ENCODE measurements at regions of chr5 and their contacts with region 1.

Region 1: DNA sequence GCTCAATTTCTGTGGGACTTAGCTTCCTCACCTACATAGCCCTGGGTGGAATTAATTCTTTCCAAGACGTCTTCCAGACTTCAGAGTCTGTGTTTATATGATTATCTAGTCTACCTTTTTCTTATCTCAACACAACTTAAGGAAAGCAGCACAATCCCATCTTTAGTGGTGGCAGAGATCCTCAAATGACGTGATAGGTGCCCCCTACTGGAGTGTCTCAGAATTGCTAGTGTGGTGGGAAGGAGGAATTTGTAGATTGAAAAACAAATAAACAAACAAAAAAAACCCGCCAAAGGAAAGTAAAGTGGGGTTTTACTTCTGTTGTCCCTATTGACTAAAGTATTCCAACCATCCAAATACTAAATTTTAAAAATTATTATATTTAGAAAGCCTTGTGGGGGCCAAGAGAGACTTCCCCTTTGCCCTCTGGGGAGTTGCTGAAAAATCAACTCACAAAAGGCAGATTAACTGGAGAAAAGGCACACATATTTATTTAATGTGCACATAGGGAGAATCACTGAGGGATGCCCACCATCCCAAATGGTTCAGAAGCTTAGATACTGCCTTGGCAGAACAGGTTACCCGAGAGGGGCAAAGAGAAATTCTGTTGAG is 283.3 kb downstream of the TMEM167A start:
- DNase-seq: peak in 4 of 5 donors; percentile 3 to 18 (median 10)
- H3K4me3 ChIP-seq: no peak overlapping the region
- H3K4me3 Mint-ChIP-seq: no peak overlapping the region
- H3K27ac ChIP-seq: no peak overlapping the region
- H3K27ac Mint-ChIP-seq: peak overlapping the region in 1 of 8 donors; percentile 32
- H3K4me1 ChIP-seq: no peaks in the 10 kb centered on the region
- H3K4me1 Mint-ChIP-seq: no peaks in the 10 kb centered on the region
- H3K27me3 ChIP-seq: no peaks in the 10 kb centered on the region
- H3K27me3 Mint-ChIP-seq: peaks cover 8 to 9% of the 10 kb centered on the region in 2 donors

Region 2: GRCh38 chr5:82351754-82352145 is 442.2 kb before region 1 on chr5:
- CTCF ChIA-PET with region 1: interaction called, 13 read pairs
- POLR2A ChIA-PET with region 1: no interaction called
- DNase-seq: peak in 2 of 5 donors; percentile 37 to 38
- H3K4me3 ChIP-seq: no peak overlapping the region
- H3K4me3 Mint-ChIP-seq: no peak overlapping the region
- H3K27ac ChIP-seq: no peak overlapping the region
- H3K27ac Mint-ChIP-seq: no peak overlapping the region
- H3K4me1 ChIP-seq: peaks cover 6% of the 10 kb centered on the region
- H3K4me1 Mint-ChIP-seq: peaks cover 5 to 26% (median 7%) of the 10 kb centered on the region in 3 donors
- H3K27me3 ChIP-seq: no peaks in the 10 kb centered on the region
- H3K27me3 Mint-ChIP-seq: peaks cover 0 to 1% of the 10 kb centered on the region in 2 donors

Region 3: DNA sequence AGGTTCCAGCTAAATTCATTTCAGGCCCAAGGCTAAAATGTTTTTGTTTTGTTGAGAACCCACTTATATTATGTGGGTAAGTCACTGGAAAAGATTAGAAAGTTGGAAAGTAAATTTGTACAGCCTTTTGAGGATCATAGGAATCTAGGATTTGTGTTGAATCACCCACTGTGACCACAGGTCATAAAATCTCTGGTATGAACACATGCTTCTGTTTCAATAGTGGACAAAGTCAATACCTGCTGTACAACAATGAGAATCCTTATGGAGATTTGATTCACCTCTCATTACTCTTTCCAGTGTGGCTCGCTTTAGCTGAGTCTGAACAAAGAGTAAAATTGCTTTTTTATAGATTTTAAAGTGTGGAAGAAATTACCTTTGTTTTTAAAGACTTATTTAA is 86.2 kb before region 1 on chr5:
- CTCF ChIA-PET with region 1: no interaction called
- POLR2A ChIA-PET with region 1: no interaction called
- DNase-seq: no peak
- H3K4me3 ChIP-seq: no peak overlapping the region
- H3K4me3 Mint-ChIP-seq: no peak overlapping the region
- H3K27ac ChIP-seq: no peak overlapping the region
- H3K27ac Mint-ChIP-seq: no peak overlapping the region
- H3K4me1 ChIP-seq: no peaks in the 10 kb centered on the region
- H3K4me1 Mint-ChIP-seq: no peaks in the 10 kb centered on the region
- H3K27me3 ChIP-seq: no peaks in the 10 kb centered on the region
- H3K27me3 Mint-ChIP-seq: peaks cover 0 to 3% of the 10 kb centered on the region in 2 donors